Mammary epithelial cell (primary cell): ENCODE measurements at regions of chr11 and their contacts with region 1.

Region 1: DNA sequence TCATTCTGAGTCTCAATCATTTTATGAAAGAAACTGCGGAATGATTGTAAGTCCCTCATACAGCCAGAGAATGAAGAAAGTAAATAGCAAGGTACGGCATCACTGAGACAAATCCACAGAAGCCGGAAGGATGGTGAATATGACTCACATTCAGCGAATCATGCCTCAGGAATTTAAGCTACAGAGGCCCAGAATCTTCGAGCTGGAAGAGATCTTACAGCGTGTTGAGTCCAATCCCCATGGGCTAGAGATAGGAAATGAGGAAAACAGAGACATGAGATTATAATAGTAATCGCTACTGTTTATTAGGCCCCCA is 173.2 kb downstream of the KIF18A start:
- DNase-seq: peak; percentile 83
- H3K4me3 ChIP-seq: no peak overlapping the region
- H3K27ac ChIP-seq: peak overlapping the region; percentile 53
- H3K4me1 ChIP-seq: peaks cover 9% of the 10 kb centered on the region
- H3K27me3 ChIP-seq: no peaks in the 10 kb centered on the region
- CTCF ChIP-seq: no peak

Region 2: DNA sequence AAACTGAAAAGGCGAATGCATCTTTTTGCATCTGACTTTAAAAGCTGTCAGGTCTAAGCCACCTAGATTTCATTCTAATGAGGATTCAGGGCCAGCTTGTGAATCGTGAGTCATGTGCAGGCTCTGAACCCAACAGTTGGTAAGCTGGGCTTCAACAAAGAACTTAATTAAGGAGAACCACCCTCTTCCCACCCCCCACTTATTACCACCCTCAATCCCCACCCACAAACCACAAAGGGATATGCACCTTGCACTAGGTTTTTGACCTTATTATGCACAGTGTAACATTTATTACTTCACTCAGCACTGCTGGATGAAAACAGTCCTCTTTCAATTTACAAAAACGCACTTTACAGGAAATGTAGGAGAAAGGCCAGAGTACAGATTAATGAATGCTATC is 334.1 kb before region 1 on chr11:
- CTCF ChIA-PET with region 1: no interaction called
- dilution Hi-C with region 1: no loop called
- in situ Hi-C with region 1: no loop called
- intact Hi-C with region 1: no loop called
- DNase-seq: no peak
- H3K4me3 ChIP-seq: no peak overlapping the region
- H3K27ac ChIP-seq: no peak overlapping the region
- H3K4me1 ChIP-seq: no peaks in the 10 kb centered on the region
- H3K27me3 ChIP-seq: no peaks in the 10 kb centered on the region
- CTCF ChIP-seq: no peak

Region 3: DNA sequence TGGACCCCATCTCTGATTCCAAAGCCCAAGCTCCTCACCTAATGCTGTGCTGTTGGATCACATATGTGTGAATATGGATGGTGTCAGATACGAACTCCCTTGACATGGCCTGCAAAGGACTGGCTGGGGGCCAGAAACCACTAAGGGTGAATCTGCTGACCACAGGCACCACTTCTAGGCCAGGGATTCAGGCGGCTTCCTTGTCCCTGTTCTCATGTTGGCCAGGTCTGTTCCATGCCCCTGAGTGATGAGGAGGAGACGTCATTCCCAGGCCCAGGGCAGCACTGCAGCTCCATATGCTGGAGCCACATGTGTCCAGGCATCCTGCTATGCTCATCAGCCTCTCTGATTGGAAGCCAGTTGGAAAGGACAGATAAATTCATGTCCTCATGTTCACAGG is 104.6 kb before region 1 on chr11:
- CTCF ChIA-PET with region 1: no interaction called
- dilution Hi-C with region 1: no loop called
- in situ Hi-C with region 1: no loop called
- intact Hi-C with region 1: no loop called
- DNase-seq: no peak
- H3K4me3 ChIP-seq: no peak overlapping the region
- H3K27ac ChIP-seq: no peak overlapping the region
- H3K4me1 ChIP-seq: no peaks in the 10 kb centered on the region
- H3K27me3 ChIP-seq: peaks cover 2% of the 10 kb centered on the region
- CTCF ChIP-seq: no peak

Region 4: DNA sequence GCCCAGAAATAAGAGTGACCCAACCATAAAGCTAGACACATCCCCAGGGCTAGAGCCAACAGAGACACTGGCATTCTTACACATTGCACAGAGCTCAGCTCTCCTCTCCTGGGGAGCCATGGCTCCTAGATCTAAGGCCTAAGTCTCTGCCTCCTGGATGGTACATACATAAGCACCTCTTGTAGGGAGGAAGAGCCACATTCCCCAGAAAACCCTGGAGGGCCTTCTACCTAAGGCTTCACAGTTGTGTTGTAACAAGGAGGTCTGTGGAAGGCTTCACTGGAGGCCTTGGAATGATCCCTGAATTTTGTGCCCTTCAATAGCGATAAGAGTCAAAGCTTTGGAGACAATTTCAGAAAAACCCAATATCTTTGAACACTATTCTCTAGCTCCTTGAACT is 19.8 kb after region 1 on chr11:
- CTCF ChIA-PET with region 1: no interaction called
- dilution Hi-C with region 1: no loop called
- in situ Hi-C with region 1: no loop called
- intact Hi-C with region 1: no loop called
- DNase-seq: no peak
- H3K4me3 ChIP-seq: no peak overlapping the region
- H3K27ac ChIP-seq: no peak overlapping the region
- H3K4me1 ChIP-seq: no peaks in the 10 kb centered on the region
- H3K27me3 ChIP-seq: no peaks in the 10 kb centered on the region
- CTCF ChIP-seq: no peak

Region 5: DNA sequence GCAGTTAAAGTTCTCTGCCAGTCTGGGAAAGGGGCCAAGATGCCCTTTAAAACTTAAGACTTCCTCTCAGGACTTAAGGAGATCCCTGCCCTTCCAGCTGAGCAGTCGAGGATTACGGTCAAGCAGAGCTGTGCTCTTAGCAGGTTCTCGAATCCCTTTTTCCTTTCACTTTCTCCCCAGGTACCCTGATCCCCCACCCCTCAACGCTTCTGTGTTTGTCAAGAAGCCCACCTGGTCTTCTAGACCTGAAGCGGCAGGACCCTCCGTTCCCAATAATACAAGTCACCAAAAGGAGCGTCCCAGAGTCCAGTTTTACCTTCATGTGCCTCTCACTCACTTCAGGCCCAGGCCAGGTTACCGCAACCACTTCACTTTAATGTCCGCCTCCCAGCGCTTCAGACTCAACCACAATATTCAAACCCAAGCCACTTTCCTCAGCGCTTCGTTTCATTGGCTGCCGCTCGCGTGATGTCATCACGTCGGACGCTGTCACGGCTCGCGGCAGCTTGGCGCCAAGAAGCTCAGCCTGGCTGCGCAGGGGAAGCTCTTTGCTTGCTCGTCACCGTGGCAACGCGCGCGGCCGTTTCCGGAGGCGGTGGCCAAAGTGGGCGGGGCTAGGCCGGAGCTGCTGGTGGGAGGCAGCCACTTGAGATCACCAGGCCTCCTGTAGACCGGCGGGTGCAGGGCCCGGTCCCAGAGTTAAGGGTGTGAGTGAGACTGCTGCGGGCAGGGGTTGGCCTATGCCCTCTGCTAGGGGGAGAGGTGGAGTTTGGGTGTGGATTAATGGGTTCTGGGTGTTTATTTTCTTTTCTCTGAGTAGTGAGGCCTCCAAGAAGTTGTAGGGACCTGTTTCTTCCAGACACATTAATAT is 173.2 kb after region 1 on chr11 and contains the starts of genes KIF18A and METTL15:
- CTCF ChIA-PET with region 1: no interaction called
- dilution Hi-C with region 1: no loop called
- in situ Hi-C with region 1: no loop called
- intact Hi-C with region 1: no loop called
- DNase-seq: peak; percentile 99
- H3K4me3 ChIP-seq: peak within 1 kb of the TSS; percentile 77 to 93 (median 85)
- H3K27ac ChIP-seq: peak within 1 kb of the TSS; percentile 98
- H3K4me1 ChIP-seq: peaks cover 16% of the 10 kb centered on the region
- H3K27me3 ChIP-seq: no peaks in the 10 kb centered on the region
- CTCF ChIP-seq: no peak
- total RNA-seq, gene KIF18A: 1.0 to 11.6 TPM
- total RNA-seq, gene METTL15: 17.2 to 17.9 TPM

Region 6: GRCh38 chr11:29260939-29261705 is 1326.3 kb after region 1 on chr11:
- CTCF ChIA-PET with region 1: interaction called, 3 read pairs
- dilution Hi-C with region 1: no loop called
- in situ Hi-C with region 1: no loop called
- intact Hi-C with region 1: loop called (anchors 10 kb)
- DNase-seq: peak; percentile 90
- H3K4me3 ChIP-seq: no peak overlapping the region
- H3K27ac ChIP-seq: peak overlapping the region; percentile 5
- H3K4me1 ChIP-seq: peaks cover 15% of the 10 kb centered on the region
- H3K27me3 ChIP-seq: no peaks in the 10 kb centered on the region
- CTCF ChIP-seq: peak; percentile 47 to 70